Activated CD8-positive, alpha-beta T cell treated with anti-CD3 and anti-CD28 coated beads for 36 hours (primary cell): ENCODE measurements at regions of chr10 and their contacts with region 1.

Region 1: DNA sequence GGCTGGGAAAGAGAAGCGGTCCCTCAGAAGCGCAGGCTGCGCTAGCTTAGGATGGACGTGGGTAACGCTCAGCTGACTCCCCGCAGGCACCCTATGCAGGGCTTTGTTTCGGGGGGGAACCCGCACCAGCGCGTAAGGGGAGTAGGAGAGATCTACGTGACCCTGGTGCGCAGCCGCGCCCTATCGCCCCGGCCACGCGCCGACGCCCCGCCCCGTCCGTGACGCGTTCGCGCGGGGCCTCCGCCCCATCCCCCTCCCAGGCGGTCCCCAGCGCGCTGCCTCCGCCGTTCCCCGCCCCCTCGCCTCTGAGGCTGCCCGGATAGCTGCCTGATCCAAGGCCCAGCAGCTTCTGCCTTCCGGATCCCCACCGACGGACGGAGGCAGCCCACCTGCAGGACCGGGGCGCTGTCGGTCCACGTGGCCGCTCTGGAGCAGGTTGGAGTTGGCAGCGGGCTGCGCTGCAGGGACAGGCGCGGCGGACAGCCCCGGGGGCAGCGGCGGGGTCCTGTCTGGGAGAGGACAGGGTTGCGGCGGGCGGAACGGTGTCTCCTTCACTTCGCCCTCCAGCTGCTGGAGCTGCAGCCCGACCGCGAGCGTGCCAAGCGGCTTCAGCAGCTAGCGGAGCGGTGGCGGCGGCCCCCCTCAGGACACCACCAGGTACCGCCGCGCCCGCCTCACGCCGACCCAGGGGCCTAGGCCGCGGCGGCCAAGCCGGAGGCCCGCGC is at the start of gene VDAC2:
- DNase-seq: peak; percentile 93
- ATAC-seq: peak; percentile 91
- H3K4me3 Mint-ChIP-seq: peak within 1 kb of the TSS; percentile 98
- H3K27ac Mint-ChIP-seq: peak within 1 kb of the TSS; percentile 100
- H3K4me1 Mint-ChIP-seq: peaks cover 38% of the 10 kb centered on the region
- H3K27me3 Mint-ChIP-seq: no peaks in the 10 kb centered on the region
- CTCF ChIP-seq: no peak
- total RNA-seq, gene VDAC2: 253 to 263 TPM

Region 2: DNA sequence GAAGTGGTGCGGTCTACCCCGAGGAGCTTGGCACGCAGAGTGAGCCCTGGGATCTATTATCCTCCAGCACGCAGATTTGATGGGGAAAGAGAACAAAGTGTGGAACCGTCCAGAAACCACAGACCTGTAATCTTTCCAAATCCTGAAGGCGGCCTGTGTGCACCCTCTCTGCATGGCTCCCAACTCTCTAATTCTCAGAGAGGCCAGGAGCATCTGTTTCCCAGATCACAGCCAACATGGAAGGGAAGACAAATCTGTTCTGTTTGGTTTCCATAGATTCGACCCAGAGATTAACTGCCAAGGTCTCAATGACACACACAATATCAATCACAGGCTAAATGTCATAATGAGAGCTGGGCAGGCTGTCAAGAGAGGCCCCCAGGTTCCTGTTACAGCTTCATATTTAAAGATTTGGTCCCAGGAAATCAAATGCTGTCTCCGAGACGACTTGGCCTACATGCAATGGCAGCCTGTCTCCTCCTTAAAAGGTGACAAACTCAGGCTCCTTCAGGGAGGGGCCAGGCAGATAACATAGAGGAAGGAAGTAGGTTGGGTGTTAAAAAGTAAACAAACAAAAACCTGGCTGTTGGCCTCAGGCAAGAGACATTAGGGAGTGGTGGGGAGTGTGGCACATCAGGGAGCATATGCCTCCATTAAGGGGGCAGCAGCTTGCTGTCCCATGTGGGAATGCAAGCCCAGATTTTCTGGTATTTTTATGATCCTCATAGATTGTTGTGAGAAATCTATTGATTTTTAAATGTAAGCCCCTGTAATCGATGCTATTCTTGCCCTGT is 147.7 kb before region 1 on chr10:
- CTCF ChIA-PET with region 1: no interaction called
- POLR2A ChIA-PET with region 1: no interaction called
- intact Hi-C with region 1: no loop called
- DNase-seq: no peak
- ATAC-seq: no peak
- H3K4me3 Mint-ChIP-seq: no peak overlapping the region
- H3K27ac Mint-ChIP-seq: no peak overlapping the region
- H3K4me1 Mint-ChIP-seq: no peaks in the 10 kb centered on the region
- H3K27me3 Mint-ChIP-seq: no peaks in the 10 kb centered on the region
- CTCF ChIP-seq: no peak

Region 3: DNA sequence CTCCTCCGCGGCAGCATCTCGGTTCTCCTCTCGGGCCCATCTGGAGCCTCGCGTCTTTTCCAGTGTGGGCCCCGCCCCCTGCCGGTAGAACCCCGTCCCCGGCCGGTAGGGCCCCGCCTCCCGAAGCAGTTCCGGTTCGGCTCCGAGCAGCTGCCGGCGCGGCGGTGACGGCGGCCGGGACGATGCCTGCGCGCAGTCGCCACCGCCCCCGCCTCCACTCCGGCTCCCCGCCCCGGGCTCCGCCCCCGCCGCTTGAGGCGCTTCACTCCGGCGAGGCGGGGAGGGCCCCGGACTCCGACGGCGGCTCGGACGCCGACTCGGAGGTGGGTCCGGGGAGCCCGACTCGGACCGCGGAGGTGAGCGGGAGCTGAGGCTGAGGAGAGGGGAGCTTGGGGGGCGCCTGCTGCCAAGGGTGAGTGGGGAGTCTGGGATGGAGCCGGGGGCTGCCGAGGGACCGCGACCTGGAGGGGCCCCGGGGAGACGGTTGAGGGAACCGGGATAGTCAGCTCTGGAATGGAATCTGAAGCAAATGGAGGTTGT is 99.0 kb before region 1 on chr10 and contains the start of gene SAMD8:
- CTCF ChIA-PET with region 1: interaction called, 6 read pairs
- POLR2A ChIA-PET with region 1: interaction called, 11 read pairs
- intact Hi-C with region 1: no loop called
- DNase-seq: peak; percentile 99
- ATAC-seq: peak; percentile 91
- H3K4me3 Mint-ChIP-seq: peak within 1 kb of the TSS; percentile 88
- H3K27ac Mint-ChIP-seq: peak within 1 kb of the TSS; percentile 93
- H3K4me1 Mint-ChIP-seq: peaks cover 46% of the 10 kb centered on the region
- H3K27me3 Mint-ChIP-seq: no peaks in the 10 kb centered on the region
- CTCF ChIP-seq: no peak
- total RNA-seq, gene SAMD8: 21.9 to 23.7 TPM

Region 4: DNA sequence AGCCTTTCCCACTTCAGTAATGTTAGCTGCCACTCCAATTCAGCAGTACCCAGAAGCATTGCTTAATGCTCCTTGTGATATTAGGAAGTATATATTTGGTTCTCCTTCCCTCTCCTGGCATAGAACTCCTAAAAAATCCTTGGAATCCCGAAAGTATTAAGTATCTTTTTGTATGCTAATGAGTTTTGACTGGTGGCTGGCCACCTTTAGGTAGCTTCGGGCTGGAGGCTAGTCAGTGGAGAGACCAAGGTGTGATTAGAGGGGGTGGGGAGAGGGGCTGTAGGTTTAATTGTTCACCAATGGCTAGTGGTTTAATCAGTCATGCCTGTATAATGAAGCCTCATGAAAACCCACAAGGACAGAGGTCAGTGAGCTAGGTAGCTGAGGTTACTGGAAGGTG is 13.1 kb after region 1 on chr10:
- CTCF ChIA-PET with region 1: interaction called, 17 read pairs
- POLR2A ChIA-PET with region 1: interaction called, 106 read pairs
- intact Hi-C with region 1: no loop called
- DNase-seq: no peak
- ATAC-seq: no peak
- H3K4me3 Mint-ChIP-seq: no peak overlapping the region
- H3K27ac Mint-ChIP-seq: peak overlapping the region; percentile 69
- H3K4me1 Mint-ChIP-seq: peaks cover 58% of the 10 kb centered on the region
- H3K27me3 Mint-ChIP-seq: no peaks in the 10 kb centered on the region
- CTCF ChIP-seq: no peak

Region 5: DNA sequence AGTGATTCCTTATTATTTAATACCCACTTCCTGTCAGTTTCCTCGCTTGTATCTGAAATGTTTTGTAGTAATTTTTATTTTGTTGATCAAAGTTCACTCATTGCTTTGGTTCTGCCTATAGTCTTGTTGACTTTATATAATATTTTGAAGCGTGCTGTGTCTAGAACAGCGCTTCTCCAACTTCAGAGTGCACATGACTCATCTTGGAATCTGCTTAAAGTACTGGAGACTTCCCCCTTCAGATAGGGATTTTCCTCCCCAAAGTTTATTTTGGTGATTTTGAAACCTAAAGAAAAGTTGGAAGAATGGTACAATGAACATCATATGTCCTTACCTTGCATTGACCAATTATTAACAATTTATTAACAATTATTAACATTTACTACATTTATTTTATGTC is 19.5 kb after region 1 on chr10:
- CTCF ChIA-PET with region 1: interaction called, 43 read pairs
- POLR2A ChIA-PET with region 1: interaction called, 106 read pairs
- intact Hi-C with region 1: no loop called
- DNase-seq: no peak
- ATAC-seq: no peak
- H3K4me3 Mint-ChIP-seq: no peak overlapping the region
- H3K27ac Mint-ChIP-seq: peak overlapping the region; percentile 66
- H3K4me1 Mint-ChIP-seq: peaks cover 49% of the 10 kb centered on the region
- H3K27me3 Mint-ChIP-seq: no peaks in the 10 kb centered on the region
- CTCF ChIP-seq: no peak

Region 6: DNA sequence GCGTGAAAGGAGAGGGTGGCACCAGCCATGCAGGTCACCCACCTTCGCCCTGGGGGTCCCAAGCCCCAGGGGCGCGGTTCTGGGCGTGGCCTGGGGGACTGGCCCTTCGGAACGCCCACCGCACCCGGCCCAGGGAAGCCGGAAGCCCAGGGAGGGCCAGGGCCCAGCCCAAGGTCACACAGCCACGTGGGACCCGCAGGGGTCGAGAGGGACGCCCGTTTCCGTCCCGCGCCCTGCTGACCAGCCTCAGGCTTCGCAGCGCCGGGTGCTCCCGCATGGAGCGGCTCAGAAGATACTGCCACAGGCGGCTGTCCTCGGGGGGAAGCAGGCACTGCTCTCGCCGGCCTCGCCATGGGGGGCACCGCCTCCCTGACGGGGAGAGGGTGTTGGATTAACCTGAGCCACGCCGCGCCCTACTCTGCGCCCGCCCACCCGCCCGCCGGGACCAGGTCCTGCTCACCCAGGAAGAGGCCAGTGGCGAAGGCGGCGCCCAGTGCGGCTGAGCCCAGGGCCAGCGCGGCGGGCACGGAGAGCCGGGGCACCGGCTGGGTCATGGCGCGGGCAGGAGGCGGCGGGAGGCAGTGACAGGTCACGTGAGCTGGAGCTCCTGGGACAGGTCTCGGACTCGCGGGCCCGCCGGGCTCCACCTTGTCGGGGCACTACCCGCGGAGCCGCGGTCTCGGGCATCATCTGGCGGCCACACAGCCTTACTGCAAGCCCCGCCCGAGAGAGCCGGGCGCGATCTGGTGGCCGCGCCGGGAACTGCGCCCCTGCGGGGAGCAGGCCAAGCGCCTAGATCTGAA is 25.1 kb after region 1 on chr10 and contains the start of gene COMTD1:
- CTCF ChIA-PET with region 1: interaction called, 43 read pairs
- POLR2A ChIA-PET with region 1: interaction called, 106 read pairs
- intact Hi-C with region 1: no loop called
- DNase-seq: peak; percentile 96
- ATAC-seq: peak; percentile 77
- H3K4me3 Mint-ChIP-seq: peak within 1 kb of the TSS; percentile 81
- H3K27ac Mint-ChIP-seq: peak within 1 kb of the TSS; percentile 94
- H3K4me1 Mint-ChIP-seq: peaks cover 24% of the 10 kb centered on the region
- H3K27me3 Mint-ChIP-seq: no peaks in the 10 kb centered on the region
- CTCF ChIP-seq: peak; percentile 100
- total RNA-seq, gene COMTD1: 54.5 to 58.1 TPM

Region 7: GRCh38 chr10:75261813-75262708 is 51.6 kb after region 1 on chr10:
- CTCF ChIA-PET with region 1: no interaction called
- POLR2A ChIA-PET with region 1: no interaction called
- intact Hi-C with region 1: no loop called
- DNase-seq: no peak
- ATAC-seq: no peak
- H3K4me3 Mint-ChIP-seq: no peak overlapping the region
- H3K27ac Mint-ChIP-seq: no peak overlapping the region
- H3K4me1 Mint-ChIP-seq: no peaks in the 10 kb centered on the region
- H3K27me3 Mint-ChIP-seq: no peaks in the 10 kb centered on the region
- CTCF ChIP-seq: no peak

Region 8: DNA sequence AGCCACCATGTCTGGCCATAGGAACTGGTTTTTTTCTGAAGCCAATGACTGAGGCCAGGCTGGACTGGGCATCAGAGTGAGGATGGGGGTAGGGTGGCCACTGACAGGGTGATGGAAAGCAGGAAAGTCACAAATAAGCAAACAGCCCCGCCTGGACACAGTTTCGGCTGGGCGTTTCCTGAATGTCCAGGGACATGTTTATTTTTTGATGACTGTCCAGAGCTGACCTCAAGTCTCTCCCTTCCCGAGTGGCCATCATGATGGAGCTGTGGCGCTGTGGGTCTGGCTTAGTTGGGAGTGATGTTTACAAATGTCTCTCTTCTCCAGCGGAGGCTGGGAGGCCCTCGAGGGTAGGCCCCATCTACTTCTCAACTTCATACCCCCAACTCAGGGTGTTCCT is 62.5 kb after region 1 on chr10:
- CTCF ChIA-PET with region 1: no interaction called
- POLR2A ChIA-PET with region 1: no interaction called
- intact Hi-C with region 1: no loop called
- DNase-seq: no peak
- ATAC-seq: no peak
- H3K4me3 Mint-ChIP-seq: no peak overlapping the region
- H3K27ac Mint-ChIP-seq: no peak overlapping the region
- H3K4me1 Mint-ChIP-seq: no peaks in the 10 kb centered on the region
- H3K27me3 Mint-ChIP-seq: peaks cover 3% of the 10 kb centered on the region
- CTCF ChIP-seq: no peak

Region 9: DNA sequence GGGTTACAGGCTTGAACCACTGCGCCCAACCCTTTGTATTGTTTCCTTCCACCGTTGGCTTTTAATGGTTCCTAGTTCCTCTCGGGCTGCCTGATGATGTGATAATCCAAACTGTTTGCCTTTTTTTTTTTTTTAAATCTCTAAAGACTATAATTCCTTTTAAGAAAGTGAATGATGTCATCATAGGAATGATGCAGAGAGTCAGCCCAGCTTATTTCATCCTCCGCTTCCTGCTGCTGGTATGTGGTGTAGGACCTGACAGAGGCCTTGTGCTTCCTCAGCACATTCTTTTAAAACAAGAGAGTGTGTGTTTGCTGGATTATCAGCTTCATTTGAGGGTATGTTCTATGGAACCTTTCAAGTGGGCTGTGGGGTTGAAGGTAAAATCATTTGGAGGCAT is 462.4 kb after region 1 on chr10:
- CTCF ChIA-PET with region 1: no interaction called
- POLR2A ChIA-PET with region 1: no interaction called
- intact Hi-C with region 1: no loop called
- DNase-seq: no peak
- ATAC-seq: no peak
- H3K4me3 Mint-ChIP-seq: no peak overlapping the region
- H3K27ac Mint-ChIP-seq: no peak overlapping the region
- H3K4me1 Mint-ChIP-seq: no peaks in the 10 kb centered on the region
- H3K27me3 Mint-ChIP-seq: peaks cover 10% of the 10 kb centered on the region
- CTCF ChIP-seq: no peak